CD8-positive, alpha-beta T cell (primary cell): ENCODE measurements at regions of chr6 and their contacts with region 1.

Region 1: GRCh38 chr6:3742426-3743344 is 8.8 kb downstream of the PXDC1 start:
- DNase-seq: peak; percentile 79 to 97 (median 87)
- ATAC-seq: peak; percentile 91
- H3K4me3 ChIP-seq: peak overlapping the region in 1 of 2 experiments; percentile 22
- H3K4me3 Mint-ChIP-seq: peak overlapping the region; percentile 47
- H3K27ac ChIP-seq: no peak overlapping the region
- H3K27ac Mint-ChIP-seq: no peak overlapping the region
- H3K4me1 ChIP-seq: peaks cover 9% of the 10 kb centered on the region
- H3K4me1 Mint-ChIP-seq: peaks cover 6% of the 10 kb centered on the region
- H3K27me3 ChIP-seq: peaks cover 0 to 2% of the 10 kb centered on the region in 2 experiments
- H3K27me3 Mint-ChIP-seq: peaks cover 11% of the 10 kb centered on the region
- CTCF ChIP-seq: peak; percentile 88

Region 2: GRCh38 chr6:3732345-3733141 is 10.1 kb before region 1 on chr6:
- CTCF ChIA-PET with region 1: interaction called, 28 read pairs
- POLR2A ChIA-PET with region 1: no interaction called
- intact Hi-C with region 1: no loop called
- DNase-seq: peak; percentile 29 to 83 (median 68)
- ATAC-seq: peak; percentile 76
- H3K4me3 ChIP-seq: no peak overlapping the region
- H3K4me3 Mint-ChIP-seq: no peak overlapping the region
- H3K27ac ChIP-seq: no peak overlapping the region
- H3K27ac Mint-ChIP-seq: no peak overlapping the region
- H3K4me1 ChIP-seq: no peaks in the 10 kb centered on the region
- H3K4me1 Mint-ChIP-seq: peaks cover 2% of the 10 kb centered on the region
- H3K27me3 ChIP-seq: no peaks in the 10 kb centered on the region
- H3K27me3 Mint-ChIP-seq: peaks cover 11% of the 10 kb centered on the region
- CTCF ChIP-seq: peak; percentile 66

Region 3: DNA sequence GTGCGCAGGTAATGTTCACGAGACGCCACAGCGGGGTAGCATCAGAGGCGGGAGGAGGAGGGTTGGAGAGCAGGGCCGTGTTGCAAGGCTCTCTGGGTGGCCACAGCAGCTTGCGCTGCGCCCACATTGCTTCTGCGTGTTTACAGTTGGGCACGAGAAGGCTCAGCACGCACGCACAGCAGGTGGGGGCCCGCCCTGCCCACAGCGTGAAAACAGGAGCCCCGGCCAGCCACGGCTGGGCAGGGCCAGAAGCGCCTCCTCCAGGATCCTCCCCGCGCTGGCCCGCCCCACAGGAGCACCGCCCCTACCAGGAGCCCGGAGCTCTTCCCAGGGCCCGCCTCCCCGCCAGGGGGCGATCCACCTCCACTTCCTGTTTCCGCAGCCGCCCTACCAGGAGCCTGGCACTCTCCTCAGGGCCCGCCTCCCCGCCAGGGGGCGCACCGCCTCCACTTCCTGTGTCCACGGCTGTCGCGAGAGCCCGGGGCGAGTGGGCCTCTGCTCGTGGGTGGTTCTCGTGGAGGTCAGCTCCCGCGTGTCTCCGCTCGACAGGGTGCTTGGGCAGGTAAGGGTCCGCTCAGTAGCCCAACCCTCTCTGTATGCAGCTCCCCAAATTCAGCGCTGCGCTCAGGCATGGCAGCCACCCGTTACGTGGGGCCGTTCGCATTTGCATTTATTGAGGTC is 106.4 kb after region 1 on chr6 and contains the start of gene FAM50B:
- CTCF ChIA-PET with region 1: interaction called, 5 read pairs
- POLR2A ChIA-PET with region 1: no interaction called
- intact Hi-C with region 1: loop called in 1 of 2 experiments (anchors 5 kb)
- DNase-seq: peak; percentile 81 to 94 (median 90)
- ATAC-seq: peak; percentile 95
- H3K4me3 ChIP-seq: peak within 1 kb of the TSS; percentile 54 to 63
- H3K4me3 Mint-ChIP-seq: peak within 1 kb of the TSS; percentile 80
- H3K27ac ChIP-seq: peak within 1 kb of the TSS; percentile 47 to 56
- H3K27ac Mint-ChIP-seq: peak within 1 kb of the TSS; percentile 84
- H3K4me1 ChIP-seq: peaks cover 6% of the 10 kb centered on the region
- H3K4me1 Mint-ChIP-seq: peaks cover 18% of the 10 kb centered on the region
- H3K27me3 ChIP-seq: no peaks in the 10 kb centered on the region
- H3K27me3 Mint-ChIP-seq: no peaks in the 10 kb centered on the region
- CTCF ChIP-seq: peak; percentile 75
- total RNA-seq, gene FAM50B: 0.97 to 1.1 TPM

Region 4: GRCh38 chr6:3977875-3978711 is 235.4 kb after region 1 on chr6:
- CTCF ChIA-PET with region 1: interaction called, 38 read pairs
- POLR2A ChIA-PET with region 1: no interaction called
- intact Hi-C with region 1: loop called (anchors 1 kb)
- DNase-seq: peak; percentile 10 to 78 (median 44)
- ATAC-seq: peak; percentile 99
- H3K4me3 ChIP-seq: peak overlapping the region in 1 of 2 experiments; percentile 6
- H3K4me3 Mint-ChIP-seq: peak overlapping the region; percentile 47
- H3K27ac ChIP-seq: no peak overlapping the region
- H3K27ac Mint-ChIP-seq: no peak overlapping the region
- H3K4me1 ChIP-seq: peaks cover 7% of the 10 kb centered on the region
- H3K4me1 Mint-ChIP-seq: peaks cover 11% of the 10 kb centered on the region
- H3K27me3 ChIP-seq: no peaks in the 10 kb centered on the region
- H3K27me3 Mint-ChIP-seq: no peaks in the 10 kb centered on the region
- CTCF ChIP-seq: peak; percentile 64

Region 5: GRCh38 chr6:4008324-4009047 is 265.8 kb after region 1 on chr6:
- CTCF ChIA-PET with region 1: interaction called, 26 read pairs
- POLR2A ChIA-PET with region 1: no interaction called
- intact Hi-C with region 1: loop called (anchors 1 kb)
- DNase-seq: peak in 2 of 9 experiments; percentile 69 to 77
- ATAC-seq: peak; percentile 85
- H3K4me3 ChIP-seq: no peak overlapping the region
- H3K4me3 Mint-ChIP-seq: no peak overlapping the region
- H3K27ac ChIP-seq: no peak overlapping the region
- H3K27ac Mint-ChIP-seq: peak overlapping the region; percentile 81
- H3K4me1 ChIP-seq: peaks cover 36% of the 10 kb centered on the region
- H3K4me1 Mint-ChIP-seq: peaks cover 60% of the 10 kb centered on the region
- H3K27me3 ChIP-seq: no peaks in the 10 kb centered on the region
- H3K27me3 Mint-ChIP-seq: no peaks in the 10 kb centered on the region
- CTCF ChIP-seq: peak; percentile 62

Region 6: DNA sequence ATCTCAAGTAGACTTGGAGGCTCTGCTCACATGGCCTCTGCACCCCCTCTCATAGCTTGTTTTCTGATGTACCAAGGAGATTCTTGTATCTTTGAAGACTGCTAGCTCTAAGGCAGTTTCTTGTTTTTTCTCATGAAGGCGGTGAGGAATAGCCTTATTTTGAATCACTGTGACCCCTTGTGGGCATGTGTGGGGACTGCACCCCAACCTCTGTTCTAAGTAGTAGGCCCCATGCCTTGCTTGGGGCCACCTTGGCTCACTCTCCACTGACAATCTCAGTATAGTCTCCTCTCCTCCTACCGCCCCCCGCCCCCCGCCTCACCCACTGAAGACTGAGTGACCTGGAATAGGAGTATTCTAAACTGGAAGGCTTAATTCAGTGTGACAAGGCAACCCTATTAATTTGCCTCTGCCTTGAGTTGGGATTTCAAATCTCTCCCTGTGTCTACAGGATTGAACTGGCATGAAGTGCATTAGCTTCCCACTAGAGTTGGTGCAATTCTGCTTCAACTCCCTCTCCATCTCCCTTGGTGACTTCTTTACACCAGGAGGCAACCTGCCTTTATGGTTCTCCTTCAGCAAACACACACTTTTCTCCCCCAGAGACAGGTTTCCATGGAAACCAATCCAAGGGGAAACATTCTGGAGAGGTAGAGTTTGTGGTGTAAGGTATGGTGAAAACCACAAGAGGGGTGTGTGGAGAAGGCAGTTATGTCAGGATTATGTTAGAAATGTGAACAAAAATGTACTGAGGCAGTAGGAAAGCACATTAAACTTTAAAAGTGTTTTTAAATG is 468.1 kb after region 1 on chr6:
- CTCF ChIA-PET with region 1: interaction called, 6 read pairs
- POLR2A ChIA-PET with region 1: no interaction called
- intact Hi-C with region 1: loop called in 1 of 2 experiments (anchors 1 kb)
- DNase-seq: peak; percentile 24 to 66 (median 51)
- ATAC-seq: peak; percentile 70
- H3K4me3 ChIP-seq: no peak overlapping the region
- H3K4me3 Mint-ChIP-seq: no peak overlapping the region
- H3K27ac ChIP-seq: no peak overlapping the region
- H3K27ac Mint-ChIP-seq: no peak overlapping the region
- H3K4me1 ChIP-seq: peaks cover 4% of the 10 kb centered on the region
- H3K4me1 Mint-ChIP-seq: peaks cover 8% of the 10 kb centered on the region
- H3K27me3 ChIP-seq: no peaks in the 10 kb centered on the region
- H3K27me3 Mint-ChIP-seq: peaks cover 8% of the 10 kb centered on the region
- CTCF ChIP-seq: peak; percentile 58

Region 7: DNA sequence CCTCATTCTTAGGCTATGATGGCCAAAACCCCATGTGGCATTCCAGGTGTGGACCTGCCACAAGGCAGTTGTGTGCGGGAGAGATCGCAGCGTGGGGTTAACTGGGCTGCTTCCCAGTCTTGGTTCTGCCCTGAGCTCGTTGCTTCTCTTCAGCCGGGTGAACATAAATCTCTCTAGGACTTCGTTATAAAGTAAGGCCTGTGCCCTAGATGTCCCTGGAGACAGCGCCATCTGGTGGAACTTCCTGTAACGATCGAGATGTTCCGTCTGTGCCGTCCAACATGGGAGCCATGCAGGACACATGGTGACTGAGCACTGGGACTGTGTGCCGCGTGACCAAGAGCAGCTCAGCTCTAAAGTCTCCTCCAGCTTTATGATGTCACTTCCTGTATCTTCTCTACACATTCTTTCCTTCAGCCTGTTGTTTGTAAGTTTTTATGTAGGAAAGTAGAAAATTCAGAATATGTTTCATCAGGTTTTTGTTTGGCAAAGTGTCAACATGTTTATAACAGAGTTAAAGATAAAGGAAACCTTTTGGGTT is 1288.0 kb after region 1 on chr6:
- CTCF ChIA-PET with region 1: no interaction called
- POLR2A ChIA-PET with region 1: no interaction called
- intact Hi-C with region 1: loop called (anchors 5 to 10 kb)
- DNase-seq: peak; percentile 44 to 79 (median 69)
- ATAC-seq: peak; percentile 84
- H3K4me3 ChIP-seq: no peak overlapping the region
- H3K4me3 Mint-ChIP-seq: no peak overlapping the region
- H3K27ac ChIP-seq: no peak overlapping the region
- H3K27ac Mint-ChIP-seq: no peak overlapping the region
- H3K4me1 ChIP-seq: no peaks in the 10 kb centered on the region
- H3K4me1 Mint-ChIP-seq: peaks cover 15% of the 10 kb centered on the region
- H3K27me3 ChIP-seq: peaks cover 0 to 2% of the 10 kb centered on the region in 2 experiments
- H3K27me3 Mint-ChIP-seq: no peaks in the 10 kb centered on the region
- CTCF ChIP-seq: peak; percentile 65